Activated CD4-positive, alpha-beta memory T cell treated with anti-CD3 and anti-CD28 coated beads for 36 hours (primary cell): ENCODE measurements at regions of chr6 and their contacts with region 1.

Region 1: DNA sequence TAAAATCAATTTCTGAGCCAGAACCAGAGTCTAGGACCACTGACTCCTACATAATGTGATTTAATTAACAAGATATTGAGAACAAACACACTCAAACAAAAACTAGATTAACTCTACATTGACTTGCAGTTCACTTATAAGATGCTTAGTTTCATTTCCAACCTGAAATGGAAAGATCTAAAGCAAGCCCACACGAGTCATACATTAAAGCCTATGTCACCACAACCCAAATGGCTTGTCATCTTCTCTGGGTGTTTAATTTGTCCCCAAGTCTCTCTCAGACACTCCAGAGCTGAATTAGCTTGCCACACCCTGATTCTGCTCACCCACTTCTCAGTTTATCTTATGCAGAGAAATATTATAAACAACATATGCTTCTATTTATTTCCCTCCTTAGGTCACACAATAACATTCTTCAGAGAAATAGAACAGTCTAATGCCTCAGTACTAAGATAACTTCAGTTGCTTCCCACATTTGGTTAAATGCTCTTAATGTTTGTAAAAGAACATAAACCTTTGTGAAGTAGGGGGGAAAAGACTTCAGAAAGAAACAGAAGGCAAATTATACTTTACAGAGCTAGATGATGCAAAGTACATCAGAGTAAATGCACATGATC is 8.8 kb upstream of the FBXO30 start:
- DNase-seq: no peak
- H3K4me3 Mint-ChIP-seq: no peak overlapping the region
- H3K27ac Mint-ChIP-seq: no peak overlapping the region
- H3K4me1 Mint-ChIP-seq: peaks cover 35% of the 10 kb centered on the region
- H3K27me3 Mint-ChIP-seq: peaks cover under 1% of the 10 kb centered on the region

Region 2: DNA sequence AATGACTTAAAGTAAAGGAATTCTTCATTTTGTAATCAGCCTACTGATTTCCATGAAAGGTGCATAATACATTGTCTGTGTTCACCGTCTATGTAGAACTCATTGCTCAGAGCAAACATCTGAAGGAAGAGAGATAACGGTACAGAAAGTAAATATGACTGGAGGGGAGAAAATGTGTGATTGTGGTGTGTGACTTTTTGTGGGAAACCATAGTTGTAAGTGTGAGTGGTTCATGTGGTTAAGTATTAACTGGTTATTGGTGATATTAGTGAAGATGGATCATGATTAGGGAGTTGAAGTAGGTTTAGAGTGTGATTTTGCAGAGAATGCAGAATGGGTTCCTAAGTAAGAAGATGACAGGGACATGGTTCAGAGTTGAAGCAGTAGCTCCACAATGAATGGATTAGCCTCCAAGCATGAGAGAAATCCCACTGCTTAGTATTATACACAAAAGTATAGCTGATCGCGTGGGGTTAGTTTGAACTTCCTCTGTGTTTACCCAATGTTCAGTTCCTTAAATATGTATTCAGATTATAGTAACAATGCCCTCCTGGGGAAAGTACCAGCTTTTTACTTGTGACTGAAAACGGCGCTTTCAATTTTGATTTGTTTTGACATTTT is 1169.4 kb before region 1 on chr6:
- CTCF ChIA-PET with region 1: no interaction called
- POLR2A ChIA-PET with region 1: no interaction called
- intact Hi-C with region 1: loop called (anchors 5 kb)
- DNase-seq: no peak
- H3K4me3 Mint-ChIP-seq: peak overlapping the region; percentile 13
- H3K27ac Mint-ChIP-seq: no peak overlapping the region
- H3K4me1 Mint-ChIP-seq: peaks cover 42% of the 10 kb centered on the region
- H3K27me3 Mint-ChIP-seq: no peaks in the 10 kb centered on the region

Region 3: GRCh38 chr6:145772846-145773245 is 50.6 kb before region 1 on chr6:
- CTCF ChIA-PET with region 1: no interaction called
- POLR2A ChIA-PET with region 1: no interaction called
- intact Hi-C with region 1: no loop called
- DNase-seq: no peak
- H3K4me3 Mint-ChIP-seq: no peak overlapping the region
- H3K27ac Mint-ChIP-seq: no peak overlapping the region
- H3K4me1 Mint-ChIP-seq: no peaks in the 10 kb centered on the region
- H3K27me3 Mint-ChIP-seq: peaks cover 2% of the 10 kb centered on the region

Region 4: GRCh38 chr6:145798530-145798929 is 24.9 kb before region 1 on chr6:
- CTCF ChIA-PET with region 1: no interaction called
- POLR2A ChIA-PET with region 1: no interaction called
- intact Hi-C with region 1: no loop called
- DNase-seq: no peak
- H3K4me3 Mint-ChIP-seq: no peak overlapping the region
- H3K27ac Mint-ChIP-seq: no peak overlapping the region
- H3K4me1 Mint-ChIP-seq: no peaks in the 10 kb centered on the region
- H3K27me3 Mint-ChIP-seq: no peaks in the 10 kb centered on the region

Region 5: GRCh38 chr6:145836170-145836569 is 12.7 kb after region 1 on chr6:
- CTCF ChIA-PET with region 1: no interaction called
- POLR2A ChIA-PET with region 1: interaction called, 5 read pairs
- intact Hi-C with region 1: loop called (anchors 1 kb)
- DNase-seq: peak; percentile 50
- H3K4me3 Mint-ChIP-seq: no peak overlapping the region
- H3K27ac Mint-ChIP-seq: no peak overlapping the region
- H3K4me1 Mint-ChIP-seq: peaks cover 8% of the 10 kb centered on the region
- H3K27me3 Mint-ChIP-seq: no peaks in the 10 kb centered on the region

Region 6: DNA sequence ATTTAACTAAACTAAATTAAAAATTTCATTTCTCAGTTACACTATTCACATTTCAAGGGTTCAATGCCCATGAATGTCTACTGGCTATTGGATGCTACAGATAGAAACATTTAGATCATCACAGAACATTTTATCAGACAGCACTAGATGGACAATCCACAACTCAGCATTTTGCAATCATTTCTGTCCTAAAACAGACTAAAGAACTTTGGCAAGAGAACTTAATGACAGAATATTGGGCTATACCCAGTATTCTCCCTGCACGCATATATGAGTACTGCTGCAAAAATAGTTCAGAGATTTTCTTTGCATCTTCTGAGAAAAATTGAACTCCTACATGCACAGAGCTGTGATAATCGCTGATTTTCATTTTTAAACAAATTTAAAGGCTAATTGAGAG is 27.2 kb after region 1 on chr6:
- CTCF ChIA-PET with region 1: no interaction called
- POLR2A ChIA-PET with region 1: no interaction called
- intact Hi-C with region 1: no loop called
- DNase-seq: no peak
- H3K4me3 Mint-ChIP-seq: no peak overlapping the region
- H3K27ac Mint-ChIP-seq: no peak overlapping the region
- H3K4me1 Mint-ChIP-seq: no peaks in the 10 kb centered on the region
- H3K27me3 Mint-ChIP-seq: no peaks in the 10 kb centered on the region

Region 7: DNA sequence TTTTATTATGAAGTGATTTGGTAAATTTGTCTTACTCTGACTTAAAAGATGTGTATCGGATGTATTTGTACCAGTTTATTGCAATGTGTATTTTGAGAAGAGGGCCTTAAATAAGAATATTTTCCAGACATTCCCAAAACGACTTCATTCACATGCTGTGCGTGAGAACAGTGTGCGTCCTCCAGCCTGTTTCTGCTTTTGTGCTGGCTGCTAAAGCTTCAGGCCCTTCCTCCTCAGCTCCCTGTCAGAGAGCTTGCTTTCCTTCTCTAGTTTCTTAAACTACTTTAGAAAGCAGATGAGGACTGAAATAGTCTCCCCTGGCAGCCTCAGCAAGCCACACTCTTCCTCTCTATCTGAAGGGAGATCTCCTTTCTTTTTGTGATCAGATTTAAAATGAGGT is 1842.8 kb after region 1 on chr6:
- CTCF ChIA-PET with region 1: no interaction called
- POLR2A ChIA-PET with region 1: no interaction called
- intact Hi-C with region 1: no loop called
- DNase-seq: no peak
- H3K4me3 Mint-ChIP-seq: no peak overlapping the region
- H3K27ac Mint-ChIP-seq: no peak overlapping the region
- H3K4me1 Mint-ChIP-seq: no peaks in the 10 kb centered on the region
- H3K27me3 Mint-ChIP-seq: no peaks in the 10 kb centered on the region